ENCODE measurements at regions of chr12 and their contacts with region 1.

Region 1: GRCh38 chr12:54324617-54325441 is at the start of gene COPZ1:
- DNase-seq: peak; percentile 92
- CTCF ChIP-seq: peak; percentile 72

Region 2: GRCh38 chr12:54229624-54230212 is 95.1 kb before region 1 on chr12:
- CTCF ChIA-PET with region 1: interaction called, 10 read pairs
- POLR2A ChIA-PET with region 1: no interaction called
- DNase-seq: no peak
- CTCF ChIP-seq: no peak

Region 3: GRCh38 chr12:54251667-54252284 is 73.1 kb before region 1 on chr12:
- CTCF ChIA-PET with region 1: interaction called, 22 read pairs
- POLR2A ChIA-PET with region 1: no interaction called
- DNase-seq: peak; percentile 65
- CTCF ChIP-seq: peak; percentile 66

Region 4: DNA sequence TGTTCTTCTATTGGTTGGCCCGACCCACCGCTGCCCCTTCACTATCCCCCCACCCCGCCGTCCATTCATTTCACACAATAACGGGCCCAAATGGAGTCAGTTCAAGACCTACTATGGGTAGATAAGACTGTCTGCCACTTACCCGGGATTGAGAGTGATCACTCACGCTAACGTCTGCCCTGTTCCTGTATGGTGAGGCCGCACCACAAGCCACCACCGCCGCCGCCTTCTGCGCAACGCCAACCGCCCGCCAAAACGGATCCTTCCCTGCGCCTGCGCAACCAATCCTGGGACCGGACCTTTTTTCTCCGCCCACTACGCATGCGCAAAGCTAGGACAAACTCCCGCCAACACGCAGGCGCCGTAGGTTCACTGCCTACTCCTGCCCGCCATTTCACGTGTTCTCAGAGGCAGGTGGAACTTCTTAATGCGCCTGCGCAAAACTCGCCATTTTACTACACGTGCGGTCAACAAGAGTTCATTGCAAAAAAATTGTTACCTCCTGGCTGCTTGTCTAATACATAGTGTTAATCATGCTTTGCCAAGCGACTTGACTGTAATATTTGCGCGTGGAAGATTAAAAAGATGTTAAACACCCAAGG is 44.9 kb before region 1 on chr12 and contains the start of gene CBX5:
- CTCF ChIA-PET with region 1: interaction called, 7 read pairs
- POLR2A ChIA-PET with region 1: interaction called, 12 read pairs
- DNase-seq: peak; percentile 96
- CTCF ChIP-seq: no peak

Region 5: GRCh38 chr12:54300732-54301427 is 23.9 kb before region 1 on chr12 and contains the start of gene NFE2:
- CTCF ChIA-PET with region 1: interaction called, 59 read pairs
- POLR2A ChIA-PET with region 1: no interaction called
- DNase-seq: no peak
- CTCF ChIP-seq: no peak

Region 6: GRCh38 chr12:54337280-54337842 is 12.5 kb after region 1 on chr12:
- CTCF ChIA-PET with region 1: interaction called, 64 read pairs
- POLR2A ChIA-PET with region 1: interaction called, 6 read pairs
- DNase-seq: no peak
- CTCF ChIP-seq: no peak

Region 7: GRCh38 chr12:54368709-54369583 is 44.1 kb after region 1 on chr12:
- CTCF ChIA-PET with region 1: interaction called, 12 read pairs
- POLR2A ChIA-PET with region 1: no interaction called
- DNase-seq: peak; percentile 82
- CTCF ChIP-seq: peak; percentile 96

Measured in GM10248 (cell line).